Endothelial cell of umbilical vein (primary cell): ENCODE measurements at regions of chr19 and their contacts with region 1.

Region 1: GRCh38 chr19:52690369-52691214 is 44.3 kb downstream of the ZNF611 start:
- DNase-seq: peak; percentile 94
- H3K4me3 ChIP-seq: peak overlapping the region; percentile 88 to 97 (median 93)
- H3K27ac ChIP-seq: peak overlapping the region; percentile 88
- H3K4me1 ChIP-seq: peaks cover 9% of the 10 kb centered on the region
- H3K27me3 ChIP-seq: no peaks in the 10 kb centered on the region
- CTCF ChIP-seq: peak in 1 of 2 donors; percentile 5
- POLR2A ChIP-seq: peak; percentile 89

Region 2: DNA sequence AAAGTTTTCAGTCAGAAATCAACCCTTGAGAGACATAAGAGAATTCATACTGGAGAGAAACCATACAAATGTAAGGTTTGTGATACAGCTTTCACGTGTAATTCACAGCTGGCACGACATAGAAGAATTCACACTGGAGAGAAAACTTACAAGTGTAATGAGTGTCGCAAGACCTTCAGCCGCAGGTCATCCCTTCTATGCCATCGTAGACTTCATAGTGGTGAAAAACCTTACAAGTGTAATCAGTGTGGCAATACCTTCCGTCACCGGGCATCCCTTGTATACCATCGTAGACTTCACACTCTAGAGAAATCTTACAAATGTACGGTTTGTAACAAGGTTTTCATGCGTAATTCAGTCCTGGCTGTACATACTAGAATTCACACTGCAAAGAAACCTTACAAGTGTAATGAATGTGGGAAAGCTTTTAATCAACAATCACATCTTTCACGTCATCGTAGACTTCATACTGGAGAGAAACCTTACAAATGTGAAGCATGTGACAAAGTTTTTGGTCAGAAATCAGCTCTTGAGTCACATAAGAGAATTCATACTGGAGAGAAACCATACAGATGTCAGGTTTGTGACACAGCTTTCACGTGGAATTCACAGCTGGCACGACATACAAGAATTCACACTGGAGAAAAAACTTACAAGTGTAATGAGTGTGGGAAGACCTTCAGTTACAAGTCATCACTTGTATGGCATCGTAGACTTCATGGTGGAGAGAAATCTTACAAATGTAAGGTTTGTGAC is 136.2 kb before region 1 on chr19:
- CTCF ChIA-PET with region 1: no interaction called
- POLR2A ChIA-PET with region 1: no interaction called
- dilution Hi-C with region 1: no loop called
- intact Hi-C with region 1: no loop called
- DNase-seq: no peak
- H3K4me3 ChIP-seq: no peak overlapping the region
- H3K27ac ChIP-seq: no peak overlapping the region
- H3K4me1 ChIP-seq: no peaks in the 10 kb centered on the region
- H3K27me3 ChIP-seq: no peaks in the 10 kb centered on the region
- CTCF ChIP-seq: no peak
- POLR2A ChIP-seq: no peak

Region 3: DNA sequence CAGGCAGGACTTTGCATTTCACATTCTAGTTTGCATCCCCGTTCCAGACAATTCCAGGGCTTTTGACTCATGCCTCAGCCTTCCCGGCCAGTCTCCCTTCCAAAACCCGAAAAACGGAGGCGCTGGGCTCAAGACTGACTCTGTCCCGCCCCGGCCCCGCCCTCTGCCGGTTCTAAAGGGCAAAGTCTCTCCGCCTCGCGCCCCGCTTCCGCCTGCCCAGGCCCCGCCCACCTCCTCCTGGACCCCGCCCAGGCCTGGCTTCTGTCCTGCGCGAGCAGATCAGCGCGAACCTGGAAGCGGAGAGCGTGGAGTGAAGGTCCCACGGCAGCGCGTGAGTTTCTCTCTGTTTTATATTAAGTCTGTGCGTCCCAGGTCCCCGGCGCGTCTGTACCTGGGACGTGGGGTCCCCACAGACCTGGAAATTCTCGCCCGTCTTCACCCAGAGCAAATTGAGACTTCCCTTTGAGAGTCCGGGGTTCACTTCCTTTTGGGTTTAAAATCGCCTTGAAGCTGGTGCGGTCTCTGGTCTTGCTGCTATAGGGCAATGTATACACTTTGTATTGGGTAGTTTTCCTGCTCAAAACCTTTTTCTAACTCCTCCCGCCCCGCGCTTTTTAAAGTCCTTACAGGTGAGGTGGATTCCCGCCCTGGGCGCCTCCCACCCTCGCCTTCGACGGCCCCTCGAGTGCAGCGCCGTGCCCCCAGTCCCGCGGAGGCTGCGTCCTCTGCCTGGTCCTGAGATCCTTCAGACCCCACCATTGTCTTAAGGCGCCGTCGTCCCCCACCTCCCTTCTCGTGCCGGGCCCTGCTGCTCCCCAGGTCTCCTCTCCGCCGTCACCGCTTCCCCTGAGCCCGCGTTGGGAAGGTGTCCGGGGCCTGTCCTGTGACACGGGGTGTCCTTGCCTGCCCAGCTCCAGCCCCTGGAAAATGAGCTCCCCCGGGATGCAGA is 89.3 kb before region 1 on chr19:
- CTCF ChIA-PET with region 1: no interaction called
- POLR2A ChIA-PET with region 1: no interaction called
- dilution Hi-C with region 1: no loop called
- intact Hi-C with region 1: loop called (anchors 5 kb)
- DNase-seq: peak; percentile 84
- H3K4me3 ChIP-seq: peak overlapping the region; percentile 58 to 82 (median 82)
- H3K27ac ChIP-seq: no peak overlapping the region
- H3K4me1 ChIP-seq: no peaks in the 10 kb centered on the region
- H3K27me3 ChIP-seq: no peaks in the 10 kb centered on the region
- CTCF ChIP-seq: peak in 1 of 2 donors; percentile 32
- POLR2A ChIP-seq: peak; percentile 66

Region 4: DNA sequence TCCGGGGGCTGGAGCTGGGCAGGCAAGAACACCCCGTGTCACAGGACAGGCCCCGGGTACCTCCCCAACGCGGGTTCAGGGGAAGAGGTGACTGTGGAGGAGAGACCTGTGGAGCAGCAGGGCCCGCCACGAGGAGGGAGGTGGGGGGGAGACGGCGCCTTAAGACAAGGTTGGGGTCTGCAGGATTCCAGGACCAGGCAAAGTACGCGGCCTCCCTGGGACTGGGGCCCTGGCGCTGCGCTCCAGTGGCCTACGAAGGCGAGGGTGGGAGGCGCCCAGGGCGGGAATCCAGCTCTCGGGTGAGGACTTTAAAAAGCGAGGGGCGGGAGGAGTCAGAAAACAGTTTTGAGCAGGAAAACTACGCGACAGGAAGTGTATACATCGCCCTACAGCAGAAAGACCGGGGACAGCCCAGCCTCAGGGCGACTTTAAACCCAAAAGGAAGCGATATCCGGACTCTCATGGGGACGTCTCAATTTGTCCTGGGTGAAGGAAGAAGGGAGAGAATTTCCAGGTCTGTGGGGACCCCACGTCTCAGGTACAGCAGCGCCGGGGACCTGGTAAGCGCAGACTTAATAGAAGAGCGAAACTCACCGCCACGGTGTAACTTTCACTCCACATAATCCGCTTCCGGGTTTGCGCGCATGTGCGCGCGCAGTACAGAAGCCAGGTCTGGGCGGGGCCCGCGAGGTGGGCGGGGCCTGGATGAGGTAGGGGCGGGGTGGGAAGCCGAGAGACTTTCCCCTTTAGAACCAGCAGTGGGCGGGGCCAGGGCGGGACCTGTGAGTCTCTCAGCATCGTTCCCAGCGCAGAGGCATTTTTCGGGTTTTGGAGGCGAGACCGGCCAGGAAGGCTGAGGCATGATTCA is 52.6 kb before region 1 on chr19 and contains the start of gene ZNF83:
- CTCF ChIA-PET with region 1: no interaction called
- POLR2A ChIA-PET with region 1: no interaction called
- dilution Hi-C with region 1: no loop called
- intact Hi-C with region 1: loop called (anchors 1 kb)
- DNase-seq: peak; percentile 95
- H3K4me3 ChIP-seq: peak within 1 kb of the TSS; percentile 63 to 79 (median 72)
- H3K27ac ChIP-seq: peak within 1 kb of the TSS; percentile 56
- H3K4me1 ChIP-seq: peaks cover 10% of the 10 kb centered on the region
- H3K27me3 ChIP-seq: no peaks in the 10 kb centered on the region
- CTCF ChIP-seq: no peak
- POLR2A ChIP-seq: peak; percentile 94
- total RNA-seq, gene ZNF83: 39.3 and 41.4 TPM in 2 replicates